Spleen (tissue), 13 donors: ENCODE measurements at regions of chr22 and their contacts with region 1.

Region 1: GRCh38 chr22:44080936-44081861 is 57.1 kb downstream of the PARVB start:
- DNase-seq: peak; percentile 87
- H3K4me3 ChIP-seq: peak overlapping the region in 1 of 8 donors; percentile 7
- H3K27ac ChIP-seq: no peak overlapping the region
- H3K4me1 ChIP-seq: peaks cover 4 to 21% (median 13%) of the 10 kb centered on the region in 6 donors
- H3K27me3 ChIP-seq: no peaks in the 10 kb centered on the region
- CTCF ChIP-seq: peak; percentile 43 to 91 (median 76)
- POLR2A ChIP-seq: no peak

Region 2: GRCh38 chr22:43993027-43993760 is 88.0 kb before region 1 on chr22:
- intact Hi-C with region 1: loop called (anchors 5 kb)
- DNase-seq: peak; percentile 85
- H3K4me3 ChIP-seq: no peak overlapping the region
- H3K27ac ChIP-seq: no peak overlapping the region
- H3K4me1 ChIP-seq: peaks cover 14 to 49% (median 29%) of the 10 kb centered on the region in 6 donors
- H3K27me3 ChIP-seq: no peaks in the 10 kb centered on the region
- CTCF ChIP-seq: peak; percentile 83 to 98 (median 96)
- POLR2A ChIP-seq: no peak

Region 3: GRCh38 chr22:44567846-44568493 is 486.8 kb after region 1 on chr22:
- intact Hi-C with region 1: loop called (anchors 10 kb)
- DNase-seq: peak; percentile 79
- H3K4me3 ChIP-seq: no peak overlapping the region
- H3K27ac ChIP-seq: no peak overlapping the region
- H3K4me1 ChIP-seq: peaks cover 0 to 10% (median 0%) of the 10 kb centered on the region in 6 donors
- H3K27me3 ChIP-seq: peaks cover 0 to 18% (median 0%) of the 10 kb centered on the region in 7 donors
- CTCF ChIP-seq: peak in 10 of 11 experiments; percentile 27 to 71 (median 54)
- POLR2A ChIP-seq: no peak

Region 4: DNA sequence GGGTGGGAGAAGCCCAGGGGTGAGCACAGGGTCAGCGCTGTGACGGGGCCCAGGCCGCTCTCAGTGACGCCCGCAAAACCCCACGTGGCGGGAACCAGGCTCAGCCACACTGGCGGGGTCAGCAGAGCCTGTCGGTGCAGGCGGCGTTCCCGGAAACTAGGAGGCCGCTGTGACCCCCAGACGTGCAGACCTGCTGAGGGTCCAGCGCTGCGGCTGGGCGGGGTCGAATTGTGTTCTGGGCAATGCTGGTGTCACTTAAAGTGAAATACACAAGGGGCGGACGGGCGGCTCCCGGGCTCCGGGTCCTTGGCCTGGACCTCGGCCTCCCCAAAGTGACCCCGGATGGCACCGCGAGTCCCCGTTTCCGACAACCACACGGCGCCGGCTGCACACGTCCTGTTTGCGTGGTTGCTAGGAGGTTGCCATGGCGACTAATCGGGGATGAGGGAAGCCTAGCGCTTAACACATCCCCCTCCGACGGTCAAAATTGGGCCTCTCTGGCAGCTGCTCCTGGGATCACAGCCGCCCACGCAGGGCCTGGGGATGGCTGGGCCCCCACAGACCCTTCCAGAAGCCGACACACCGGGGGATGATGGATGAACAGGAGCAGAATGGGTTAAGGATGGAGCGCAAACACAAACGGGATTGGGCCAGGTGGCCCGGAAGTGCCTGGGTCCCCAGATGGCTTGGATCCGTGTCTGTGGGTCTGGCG is 539.1 kb after region 1 on chr22:
- intact Hi-C with region 1: loop called (anchors 5 kb)
- DNase-seq: peak; percentile 92
- H3K4me3 ChIP-seq: peak overlapping the region in 6 of 8 donors; percentile 8 to 61 (median 24)
- H3K27ac ChIP-seq: peak overlapping the region in 4 of 8 donors; percentile 21 to 64 (median 50)
- H3K4me1 ChIP-seq: peaks cover 5 to 36% (median 18%) of the 10 kb centered on the region in 6 donors
- H3K27me3 ChIP-seq: peaks cover 0 to 42% (median 12%) of the 10 kb centered on the region in 7 donors
- CTCF ChIP-seq: peak in 1 of 11 experiments; percentile 9
- POLR2A ChIP-seq: no peak